AG04450 (cell line): ENCODE measurements at regions of chr16 and their contacts with region 1.

Region 1: DNA sequence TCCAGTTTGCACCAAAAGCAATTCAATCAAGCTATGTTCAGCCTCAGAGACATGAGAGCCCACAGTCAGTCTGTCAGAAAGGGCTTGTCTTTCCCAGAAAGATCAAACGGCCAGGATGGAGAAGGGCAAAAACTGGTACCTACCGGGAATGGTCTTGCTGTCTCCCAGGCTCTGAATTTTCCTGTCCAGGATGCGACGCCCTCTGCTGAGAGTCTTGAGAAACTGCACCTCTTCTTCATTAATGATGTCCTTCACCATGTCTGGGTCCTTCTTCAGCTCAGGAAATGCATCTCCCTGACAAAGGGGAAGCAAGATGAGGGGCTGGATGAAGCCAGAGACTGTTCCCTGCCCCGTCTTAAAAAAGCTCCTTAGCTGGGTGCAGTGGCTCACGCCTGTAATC is 15.8 kb upstream of the EXOSC6 start:
- DNase-seq: no peak
- H3K4me3 ChIP-seq: no peak overlapping the region
- H3K27ac ChIP-seq: no peak overlapping the region
- H3K27me3 ChIP-seq: no peaks in the 10 kb centered on the region
- CTCF ChIP-seq: peak; percentile 67

Region 2: DNA sequence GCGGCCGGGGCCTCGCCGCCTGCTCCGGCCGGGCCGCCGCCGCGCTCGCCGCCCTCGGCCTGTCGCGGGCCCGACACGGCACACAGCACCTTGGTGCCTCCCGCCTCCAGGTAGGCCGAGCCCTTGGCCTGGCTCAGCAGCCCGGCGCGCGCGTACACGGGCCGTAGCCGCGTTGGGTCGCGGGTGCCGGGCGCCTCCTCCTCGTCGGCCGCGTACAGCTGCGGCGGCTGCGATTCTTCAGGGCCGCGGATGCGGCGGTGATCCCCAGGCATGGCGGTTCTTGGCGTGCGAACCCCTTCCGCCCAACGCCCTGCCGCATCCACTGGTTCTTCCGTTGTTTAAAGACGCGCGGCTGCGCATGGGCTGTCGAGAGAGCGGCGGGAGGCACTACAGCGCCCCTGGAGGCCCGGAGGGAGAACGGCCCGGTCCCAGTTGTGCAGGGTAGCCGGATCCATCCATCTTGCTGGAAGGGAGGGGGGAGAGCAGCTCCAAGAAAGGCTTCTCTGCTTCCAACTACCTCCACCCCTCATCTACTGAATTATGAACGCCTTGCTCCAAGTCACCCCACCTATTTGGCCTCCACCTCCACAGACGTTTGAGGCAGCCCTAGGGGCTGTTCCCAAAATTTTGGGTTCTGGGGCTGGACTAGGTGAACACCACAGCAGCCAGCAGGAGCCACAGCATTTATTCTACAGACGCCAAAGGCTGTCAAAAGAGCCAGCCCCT is 15.7 kb before region 1 on chr16 and contains the start of gene EXOSC6:
- CTCF ChIA-PET with region 1: interaction called, 46 read pairs
- POLR2A ChIA-PET with region 1: interaction called, 5 read pairs
- DNase-seq: peak; percentile 69
- H3K4me3 ChIP-seq: peak within 1 kb of the TSS; percentile 58
- H3K27ac ChIP-seq: no peak within 1 kb of the TSS
- H3K27me3 ChIP-seq: no peaks in the 10 kb centered on the region
- CTCF ChIP-seq: peak; percentile 91
- polyA plus RNA-seq, gene EXOSC6: 7.4 and 8.5 TPM in 2 replicates

Region 3: GRCh38 chr16:70298988-70299938 is 31.7 kb after region 1 on chr16 and contains the start of gene DDX19B:
- CTCF ChIA-PET with region 1: no interaction called
- POLR2A ChIA-PET with region 1: no interaction called
- DNase-seq: no peak
- H3K4me3 ChIP-seq: peak within 1 kb of the TSS; percentile 96
- H3K27ac ChIP-seq: peak within 1 kb of the TSS; percentile 90
- H3K27me3 ChIP-seq: no peaks in the 10 kb centered on the region
- CTCF ChIP-seq: peak; percentile 3; the same call in 1 of the 2 replicates
- polyA plus RNA-seq, gene DDX19B: 36.5 and 41.9 TPM in 2 replicates

Region 4: GRCh38 chr16:70364399-70364798 is 96.9 kb after region 1 on chr16:
- CTCF ChIA-PET with region 1: no interaction called
- POLR2A ChIA-PET with region 1: no interaction called
- DNase-seq: no peak
- H3K4me3 ChIP-seq: no peak overlapping the region
- H3K27ac ChIP-seq: no peak overlapping the region
- H3K27me3 ChIP-seq: no peaks in the 10 kb centered on the region
- CTCF ChIP-seq: no peak